IMR-90 (cell line): ENCODE measurements at regions of chr20 and their contacts with region 1.

Region 1: DNA sequence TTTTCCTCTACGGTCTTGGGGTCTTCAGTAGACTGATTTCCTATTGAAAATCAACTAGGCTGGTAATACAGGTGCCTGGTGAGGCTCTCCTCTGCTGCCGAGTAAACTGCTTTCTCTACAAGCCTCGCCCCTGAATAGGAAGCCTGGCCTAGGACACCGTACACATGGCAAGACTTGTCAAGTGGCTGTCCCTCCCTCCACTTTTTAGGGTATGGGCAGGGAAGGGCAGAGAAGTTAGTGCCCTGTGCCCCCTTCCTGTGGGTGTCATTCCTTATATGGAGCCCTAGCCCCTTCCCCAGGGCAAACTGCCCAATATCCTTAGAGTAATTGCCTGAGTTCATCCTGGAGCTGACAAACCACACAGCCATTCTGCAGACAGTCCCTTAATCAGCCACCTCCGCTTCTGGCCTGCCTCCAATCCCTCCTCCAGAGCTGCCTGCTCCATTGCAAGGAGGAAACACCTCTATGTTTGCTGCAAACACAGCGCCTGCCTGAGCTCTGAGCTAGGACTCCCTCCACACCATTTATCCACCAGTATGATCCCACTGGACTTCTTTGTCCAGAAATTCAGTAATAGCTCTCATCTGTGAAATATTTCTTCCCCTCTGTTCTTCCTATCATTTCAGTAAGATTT is 93.1 kb downstream of the CHD6 start:
- DNase-seq: peak; percentile 58
- ATAC-seq: peak; percentile 90
- H3K4me3 ChIP-seq: no peak overlapping the region
- H3K27ac ChIP-seq: no peak overlapping the region
- H3K4me1 ChIP-seq: peaks cover 4% of the 10 kb centered on the region
- H3K27me3 ChIP-seq: no peaks in the 10 kb centered on the region
- CTCF ChIP-seq: no peak
- POLR2A ChIP-seq: no peak
- RAD21 ChIP-seq: no peak

Region 2: GRCh38 chr20:41560970-41561369 is 35.9 kb after region 1 on chr20:
- CTCF ChIA-PET with region 1: no interaction called
- POLR2A ChIA-PET with region 1: no interaction called
- dilution Hi-C with region 1: no loop called
- in situ Hi-C with region 1: no loop called
- intact Hi-C with region 1: no loop called
- DNase-seq: no peak
- ATAC-seq: no peak
- H3K4me3 ChIP-seq: no peak overlapping the region
- H3K27ac ChIP-seq: no peak overlapping the region
- H3K4me1 ChIP-seq: peaks cover 3% of the 10 kb centered on the region; the same call in 1 of the 2 replicates
- H3K27me3 ChIP-seq: no peaks in the 10 kb centered on the region
- CTCF ChIP-seq: no peak
- POLR2A ChIP-seq: no peak
- RAD21 ChIP-seq: no peak

Region 3: GRCh38 chr20:41609474-41609873 is 84.4 kb after region 1 on chr20:
- CTCF ChIA-PET with region 1: no interaction called
- POLR2A ChIA-PET with region 1: no interaction called
- dilution Hi-C with region 1: no loop called
- in situ Hi-C with region 1: loop called (anchors 5 kb)
- intact Hi-C with region 1: no loop called
- DNase-seq: no peak
- ATAC-seq: no peak
- H3K4me3 ChIP-seq: no peak overlapping the region
- H3K27ac ChIP-seq: no peak overlapping the region
- H3K4me1 ChIP-seq: no peaks in the 10 kb centered on the region; the same call in 1 of the 2 replicates
- H3K27me3 ChIP-seq: no peaks in the 10 kb centered on the region
- CTCF ChIP-seq: no peak
- POLR2A ChIP-seq: no peak
- RAD21 ChIP-seq: no peak

Region 4: DNA sequence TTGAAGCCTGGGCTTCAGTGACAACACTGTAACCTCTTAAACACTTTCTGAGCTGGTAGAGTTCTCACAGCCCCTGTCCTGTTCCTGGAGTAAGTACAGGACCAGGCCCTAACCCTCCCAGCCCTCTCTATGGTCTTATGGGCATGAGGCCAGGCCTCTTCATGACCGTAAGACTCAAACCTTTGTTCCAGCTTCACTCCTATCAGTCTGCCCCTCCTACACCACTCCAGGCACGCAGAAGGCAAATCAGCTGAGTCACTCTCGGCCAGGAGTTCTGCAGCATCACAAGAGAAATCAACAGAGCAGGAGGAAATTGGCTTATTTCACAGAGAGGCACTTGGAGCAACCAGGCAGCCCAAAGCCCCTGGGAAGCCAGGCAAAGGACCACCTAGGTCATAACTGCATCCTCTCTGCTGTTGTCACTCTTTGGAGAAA is 118.4 kb after region 1 on chr20:
- CTCF ChIA-PET with region 1: no interaction called
- POLR2A ChIA-PET with region 1: no interaction called
- dilution Hi-C with region 1: no loop called
- in situ Hi-C with region 1: no loop called
- intact Hi-C with region 1: no loop called
- DNase-seq: peak; percentile 80
- ATAC-seq: peak; percentile 88
- H3K4me3 ChIP-seq: no peak overlapping the region
- H3K27ac ChIP-seq: no peak overlapping the region
- H3K4me1 ChIP-seq: peaks cover 5% of the 10 kb centered on the region
- H3K27me3 ChIP-seq: peaks cover 9% of the 10 kb centered on the region
- CTCF ChIP-seq: no peak
- POLR2A ChIP-seq: no peak
- RAD21 ChIP-seq: no peak